Activated T-helper 2 cell treated with anti-CD3 and anti-CD28 coated beads, Interferon-gamma antibody, Interleukin-2, Interleukin-4, amounts not matched to agents 10 μg/mL and 5 μg/mL and 100 μg/mL, durations not matched to agents 14 hours and 24 hours and 36 hours (primary cell): ENCODE measurements at regions of chr9 and their contacts with region 1.

Region 1: DNA sequence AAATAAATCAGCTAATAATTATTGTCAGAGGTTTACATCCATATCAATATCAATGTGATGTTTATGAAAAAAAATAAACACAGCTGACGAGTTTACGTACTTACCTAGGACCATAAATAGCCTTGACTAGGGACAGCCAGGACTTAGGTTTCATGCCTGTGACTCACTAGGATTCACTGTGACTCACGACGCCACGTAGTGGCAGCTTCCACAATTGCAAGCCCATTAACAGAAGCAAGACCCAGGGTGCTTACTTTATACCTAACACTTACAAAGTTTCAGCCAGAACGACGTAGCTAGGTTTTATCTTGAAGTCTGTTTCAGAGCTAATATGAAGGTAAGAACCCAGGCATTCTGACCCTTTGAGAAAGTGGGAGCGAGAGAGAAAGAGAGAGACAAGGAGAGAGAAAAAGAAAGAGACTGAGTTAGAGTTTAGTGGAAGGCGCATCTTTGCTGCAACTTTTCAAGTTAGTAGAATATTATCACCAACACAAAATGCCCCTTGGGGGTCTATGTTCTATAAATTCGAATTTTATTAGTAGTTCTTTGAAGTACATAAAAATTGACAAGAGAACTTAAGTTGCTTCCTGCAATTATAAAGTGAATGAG is 191.2 kb downstream of the GNA14 start:
- DNase-seq: peak; percentile 73
- H3K4me3 Mint-ChIP-seq: no peak overlapping the region
- H3K27ac Mint-ChIP-seq: no peak overlapping the region
- H3K4me1 Mint-ChIP-seq: peaks cover 17% of the 10 kb centered on the region
- H3K27me3 Mint-ChIP-seq: no peaks in the 10 kb centered on the region

Region 2: GRCh38 chr9:76818271-76818670 is 638.7 kb before region 1 on chr9:
- intact Hi-C with region 1: no loop called
- DNase-seq: no peak
- H3K4me3 Mint-ChIP-seq: no peak overlapping the region
- H3K27ac Mint-ChIP-seq: no peak overlapping the region
- H3K4me1 Mint-ChIP-seq: no peaks in the 10 kb centered on the region
- H3K27me3 Mint-ChIP-seq: no peaks in the 10 kb centered on the region

Region 3: DNA sequence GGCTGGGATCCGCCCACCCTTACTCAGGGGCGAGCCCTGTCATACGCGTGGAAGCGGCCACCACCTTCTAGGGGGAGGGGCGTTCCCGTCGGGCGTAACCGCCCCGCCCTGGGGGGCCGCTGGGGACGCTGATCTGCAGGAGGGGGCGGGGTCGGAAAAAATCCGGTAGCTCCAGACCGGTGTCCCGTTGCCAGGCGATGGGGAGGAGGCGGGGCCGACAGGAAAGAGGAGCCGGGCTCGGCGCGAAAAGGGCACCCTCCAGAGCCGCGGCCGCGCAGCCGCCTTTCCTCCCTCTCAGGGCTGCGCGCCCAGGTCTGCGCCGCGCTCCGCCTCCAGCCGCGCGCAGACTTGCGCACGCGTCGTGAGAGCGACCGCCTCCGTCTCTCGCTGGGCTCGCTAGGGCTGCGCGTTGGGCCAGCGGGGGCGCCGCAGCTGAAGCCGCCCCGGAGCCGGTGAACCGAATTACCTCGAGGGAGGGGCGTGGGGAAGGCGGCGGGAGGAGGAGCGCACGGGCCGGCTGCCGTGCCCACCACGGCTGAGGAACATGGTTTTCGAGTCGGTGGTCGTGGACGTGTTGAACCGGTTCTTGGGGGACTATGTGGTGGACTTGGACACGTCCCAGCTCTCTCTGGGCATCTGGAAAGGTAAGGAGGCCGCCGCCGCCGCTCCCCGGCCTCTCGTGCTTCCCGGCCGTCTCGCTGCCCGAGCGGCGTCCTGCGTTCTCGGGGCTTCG is 279.6 kb before region 1 on chr9 and contains the start of gene VPS13A:
- intact Hi-C with region 1: loop called (anchors 5 kb)
- DNase-seq: peak; percentile 93
- H3K4me3 Mint-ChIP-seq: peak within 1 kb of the TSS; percentile 91
- H3K27ac Mint-ChIP-seq: peak within 1 kb of the TSS; percentile 90
- H3K4me1 Mint-ChIP-seq: peaks cover 27% of the 10 kb centered on the region
- H3K27me3 Mint-ChIP-seq: peaks cover 12% of the 10 kb centered on the region
- total RNA-seq, gene VPS13A: 43.8 and 46.9 TPM in 2 replicates

Region 4: GRCh38 chr9:77261605-77262004 is 195.3 kb before region 1 on chr9:
- intact Hi-C with region 1: no loop called
- DNase-seq: no peak
- H3K4me3 Mint-ChIP-seq: no peak overlapping the region
- H3K27ac Mint-ChIP-seq: no peak overlapping the region
- H3K4me1 Mint-ChIP-seq: peaks cover 2% of the 10 kb centered on the region
- H3K27me3 Mint-ChIP-seq: no peaks in the 10 kb centered on the region

Region 5: DNA sequence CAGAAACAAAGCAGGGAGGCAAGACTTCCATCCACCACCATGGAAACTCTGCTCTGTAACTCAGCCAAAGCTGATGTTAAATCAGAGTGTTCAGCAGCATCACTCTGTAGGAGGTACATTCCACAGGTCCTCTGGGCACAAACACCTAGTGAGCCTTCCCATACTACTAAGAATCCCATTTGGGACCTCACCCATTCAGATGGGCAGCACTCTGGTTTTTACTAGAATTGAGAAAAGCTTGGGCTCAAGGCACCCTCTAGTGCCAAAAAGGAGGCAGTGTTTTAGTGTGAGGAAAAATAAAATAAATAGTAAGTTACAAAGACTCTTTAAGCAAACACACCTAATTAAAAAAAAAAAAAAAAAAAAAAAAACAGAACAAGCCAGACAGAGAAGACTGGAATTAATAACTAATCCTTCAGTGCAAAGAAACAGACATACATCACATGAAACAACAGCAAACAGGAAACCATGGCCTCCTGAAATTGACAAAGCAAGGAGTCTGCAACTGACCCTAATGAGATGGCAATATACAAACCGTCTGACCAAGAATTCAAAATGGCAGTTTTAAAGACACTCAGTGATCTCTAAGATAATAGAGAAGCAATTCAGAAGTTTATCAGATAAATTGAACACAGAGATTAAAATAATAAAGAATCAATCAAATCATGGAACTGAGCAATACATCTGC is 31.6 kb after region 1 on chr9:
- intact Hi-C with region 1: loop called (anchors 1 kb)
- DNase-seq: no peak
- H3K4me3 Mint-ChIP-seq: peak overlapping the region; percentile 61
- H3K27ac Mint-ChIP-seq: no peak overlapping the region
- H3K4me1 Mint-ChIP-seq: peaks cover 23% of the 10 kb centered on the region
- H3K27me3 Mint-ChIP-seq: peaks cover 6% of the 10 kb centered on the region

Region 6: GRCh38 chr9:77575785-77576184 is 118.9 kb after region 1 on chr9:
- intact Hi-C with region 1: no loop called
- DNase-seq: no peak
- H3K4me3 Mint-ChIP-seq: no peak overlapping the region
- H3K27ac Mint-ChIP-seq: no peak overlapping the region
- H3K4me1 Mint-ChIP-seq: no peaks in the 10 kb centered on the region
- H3K27me3 Mint-ChIP-seq: no peaks in the 10 kb centered on the region

Region 7: DNA sequence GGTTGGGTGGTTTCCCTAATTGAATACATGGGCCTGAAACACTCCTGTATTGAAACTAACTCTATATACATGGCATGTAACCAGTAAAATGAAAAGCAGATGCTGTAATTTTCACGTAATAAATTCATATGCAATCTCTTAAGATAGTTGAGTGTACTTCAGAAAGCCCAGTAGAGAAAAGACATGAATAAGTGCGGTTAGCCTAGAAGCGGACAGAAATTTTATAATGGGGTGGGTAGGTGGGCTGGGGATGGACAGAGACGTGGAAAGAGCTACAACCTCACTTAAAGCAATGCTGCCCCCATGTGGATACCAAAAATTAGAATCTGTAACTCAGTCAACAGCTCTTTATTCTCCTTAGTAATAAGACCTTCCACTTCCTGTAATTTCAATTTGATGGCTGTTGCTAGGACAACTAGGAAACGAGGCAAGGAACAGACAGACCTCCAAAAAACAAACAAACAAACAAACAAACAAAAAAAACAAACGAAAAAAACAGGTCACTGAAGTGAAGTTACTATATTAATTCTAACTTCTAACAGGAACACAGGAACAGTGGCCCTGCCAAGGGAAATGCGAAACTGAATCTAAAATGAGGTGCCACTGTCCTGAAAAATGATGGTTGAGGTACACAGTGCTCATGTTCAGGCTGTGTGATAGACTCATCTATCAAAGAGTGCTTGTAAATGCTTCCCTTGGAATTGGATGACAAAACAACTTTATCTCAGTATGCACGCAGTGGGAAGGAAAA is 294.6 kb after region 1 on chr9:
- intact Hi-C with region 1: loop called (anchors 1 kb)
- DNase-seq: no peak
- H3K4me3 Mint-ChIP-seq: no peak overlapping the region
- H3K27ac Mint-ChIP-seq: peak overlapping the region; percentile 75
- H3K4me1 Mint-ChIP-seq: peaks cover 22% of the 10 kb centered on the region
- H3K27me3 Mint-ChIP-seq: no peaks in the 10 kb centered on the region

Region 8: DNA sequence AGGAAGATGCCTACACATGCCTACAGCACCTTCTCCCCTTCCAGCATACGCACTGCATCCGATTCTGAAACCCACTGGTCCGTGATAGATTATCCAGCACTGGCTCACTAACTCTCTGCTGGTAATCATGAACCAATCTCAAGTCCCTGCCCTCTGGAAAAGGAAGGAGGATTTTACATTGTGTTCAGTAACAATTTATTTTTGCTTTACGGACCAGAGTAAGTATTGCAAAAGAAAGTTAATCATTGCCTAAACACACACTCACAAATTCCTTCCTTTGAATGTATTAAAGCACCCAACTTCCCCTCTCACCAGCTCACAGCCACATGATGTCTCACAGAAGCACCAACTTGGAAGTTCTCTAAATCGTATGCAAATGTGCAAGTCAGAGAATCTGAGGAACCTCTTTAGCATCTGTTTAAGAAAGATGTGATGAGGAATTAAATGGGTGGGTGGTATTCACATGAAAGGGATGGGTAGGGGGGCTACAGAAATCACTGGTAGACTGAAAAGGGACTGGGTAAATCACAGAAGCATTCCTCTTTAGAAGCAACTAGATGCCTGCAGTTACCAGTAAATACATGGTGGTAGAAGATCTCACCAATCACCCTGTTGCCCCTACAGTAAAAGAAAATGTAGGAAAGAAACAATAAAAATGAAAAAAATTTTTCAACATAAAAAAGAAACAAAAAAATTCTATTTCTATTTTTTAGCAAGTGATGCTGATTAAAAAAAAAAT is 566.2 kb after region 1 on chr9:
- intact Hi-C with region 1: loop called (anchors 10 kb)
- DNase-seq: no peak
- H3K4me3 Mint-ChIP-seq: no peak overlapping the region
- H3K27ac Mint-ChIP-seq: no peak overlapping the region
- H3K4me1 Mint-ChIP-seq: peaks cover 51% of the 10 kb centered on the region
- H3K27me3 Mint-ChIP-seq: no peaks in the 10 kb centered on the region